GM23248 (cell line): ENCODE measurements at regions of chr17 and their contacts with region 1.

Region 1: GRCh38 chr17:979538-980405 is at the start of gene NXN:
- DNase-seq: peak; percentile 92
- H3K4me3 ChIP-seq: peak within 1 kb of the TSS; percentile 90
- H3K27ac ChIP-seq: peak within 1 kb of the TSS; percentile 55
- H3K4me1 ChIP-seq: peaks cover 30% of the 10 kb centered on the region
- H3K27me3 ChIP-seq: no peaks in the 10 kb centered on the region
- total RNA-seq, gene NXN: 41.9 and 51.7 TPM in 2 replicates

Region 2: GRCh38 chr17:789160-789840 is 190.5 kb before region 1 on chr17:
- in situ Hi-C with region 1: loop called (anchors 5 kb)
- DNase-seq: no peak
- H3K4me3 ChIP-seq: no peak overlapping the region
- H3K27ac ChIP-seq: no peak overlapping the region
- H3K4me1 ChIP-seq: no peaks in the 10 kb centered on the region
- H3K27me3 ChIP-seq: no peaks in the 10 kb centered on the region